ENCODE measurements at regions of chr15 and their contacts with region 1.

Region 1: DNA sequence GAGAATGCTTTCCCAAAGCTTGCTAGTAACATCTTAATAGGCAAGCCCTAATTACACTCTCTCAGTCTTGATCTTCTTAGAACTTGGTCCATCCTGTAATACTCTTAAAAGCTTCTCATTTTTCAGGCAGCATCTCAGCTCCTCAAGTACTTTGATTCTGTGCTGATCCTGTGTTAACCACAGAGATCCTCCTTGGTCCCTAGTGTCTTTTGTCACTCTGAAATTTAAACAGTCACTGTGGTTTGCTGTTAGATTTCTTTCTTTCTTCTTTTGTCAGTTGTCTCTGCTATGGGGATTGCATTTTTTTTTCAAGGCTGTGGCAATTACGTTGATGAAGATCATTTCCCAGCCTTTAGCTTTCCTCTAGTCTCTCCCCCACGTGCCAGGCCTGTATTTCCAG is 26.0 kb upstream of the UBE3A start:
- DNase-seq: no peak
- ATAC-seq: no peak
- H3K4me3 ChIP-seq: no peak overlapping the region
- H3K27ac ChIP-seq: no peak overlapping the region
- H3K4me1 ChIP-seq: no peaks in the 10 kb centered on the region
- H3K27me3 ChIP-seq: no peaks in the 10 kb centered on the region
- CTCF ChIP-seq: no peak
- POLR2A ChIP-seq: no peak
- RAD21 ChIP-seq: no peak

Region 2: GRCh38 chr15:24659622-24660021 is 805.2 kb before region 1 on chr15:
- CTCF ChIA-PET with region 1: no interaction called
- POLR2A ChIA-PET with region 1: no interaction called
- dilution Hi-C with region 1: no loop called
- in situ Hi-C with region 1: no loop called
- intact Hi-C with region 1: loop called (anchors 5 kb)
- DNase-seq: no peak
- ATAC-seq: no peak
- H3K4me3 ChIP-seq: no peak overlapping the region
- H3K27ac ChIP-seq: no peak overlapping the region
- H3K4me1 ChIP-seq: no peaks in the 10 kb centered on the region
- H3K27me3 ChIP-seq: no peaks in the 10 kb centered on the region
- CTCF ChIP-seq: no peak
- POLR2A ChIP-seq: no peak
- RAD21 ChIP-seq: no peak

Region 3: GRCh38 chr15:25508369-25509002 is 43.7 kb after region 1 on chr15:
- CTCF ChIA-PET with region 1: no interaction called
- POLR2A ChIA-PET with region 1: no interaction called
- dilution Hi-C with region 1: no loop called
- in situ Hi-C with region 1: no loop called
- intact Hi-C with region 1: no loop called
- DNase-seq: peak; percentile 64
- ATAC-seq: peak; percentile 65; the same call in 1 of the 2 replicates
- H3K4me3 ChIP-seq: no peak overlapping the region
- H3K27ac ChIP-seq: no peak overlapping the region
- H3K4me1 ChIP-seq: peaks cover 3% of the 10 kb centered on the region; the same call in 1 of the 2 replicates
- H3K27me3 ChIP-seq: no peaks in the 10 kb centered on the region
- CTCF ChIP-seq: peak; percentile 86
- POLR2A ChIP-seq: 0 out of 2 replicates have a peak, but pooled peaks have one; percentile 32
- RAD21 ChIP-seq: peak; percentile 92